ENCODE measurements at regions of chr12 and their contacts with region 1.

Region 1: DNA sequence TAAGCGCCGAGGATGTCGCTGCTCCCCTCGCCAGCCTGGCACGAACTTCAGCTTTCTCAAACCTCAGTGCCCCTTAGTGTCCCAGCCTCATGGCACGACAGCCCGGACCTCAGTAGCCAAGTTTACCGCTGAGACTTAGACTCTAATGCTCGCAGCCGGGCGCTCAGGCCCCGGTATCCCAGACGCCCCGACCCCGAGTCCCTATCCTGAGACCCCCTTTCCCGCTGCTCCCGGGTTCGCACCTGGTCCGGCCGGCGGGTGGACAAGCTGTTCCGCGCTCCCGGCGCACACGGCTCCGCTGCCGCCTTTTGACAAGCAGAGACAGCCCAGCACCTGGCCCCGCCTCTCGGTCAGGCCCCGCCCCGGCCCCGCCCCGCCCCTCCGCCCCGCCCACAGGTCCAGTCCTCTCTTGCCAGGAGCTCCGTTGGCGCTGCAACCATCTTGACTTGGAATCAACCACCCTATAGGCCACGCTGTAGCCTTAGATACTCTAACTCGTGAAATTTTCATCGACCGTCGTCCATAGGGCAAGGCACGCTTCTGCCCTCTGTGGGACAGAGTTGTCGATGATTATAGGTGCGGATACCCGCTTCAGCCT is at the start of gene VDR:
- DNase-seq: peak; percentile 28
- ATAC-seq: peak; percentile 31
- H3K4me3 ChIP-seq: peak within 1 kb of the TSS; percentile 30 to 60 (median 42); a peak in 5 of 6 replicates
- H3K27ac ChIP-seq: no peak within 1 kb of the TSS
- H3K4me1 ChIP-seq: peaks cover 59% of the 10 kb centered on the region
- H3K27me3 ChIP-seq: peaks cover 0 to 31% of the 10 kb centered on the region in 2 experiments; a peak in 3 of 5 replicates
- CTCF ChIP-seq: no peak
- EP300 ChIP-seq: no peak
- POLR2A ChIP-seq: no peak
- RAD21 ChIP-seq: no peak
- total RNA-seq, gene VDR: 0.21 and 0.33 TPM in 2 replicates

Region 2: GRCh38 chr12:47949441-47950308 is 44.9 kb after region 1 on chr12:
- CTCF ChIA-PET with region 1: interaction called, 30 read pairs
- POLR2A ChIA-PET with region 1: interaction called, 3 read pairs
- in situ Hi-C with region 1: loop called (anchors 5 kb)
- intact Hi-C with region 1: loop called (anchors 1 kb)
- DNase-seq: peak; percentile 76
- ATAC-seq: peak; percentile 89
- H3K4me3 ChIP-seq: peak overlapping the region; percentile 34 to 54 (median 41); a peak in 5 of 6 replicates
- H3K27ac ChIP-seq: peak overlapping the region; percentile 51
- H3K4me1 ChIP-seq: peaks cover 60% of the 10 kb centered on the region
- H3K27me3 ChIP-seq: peaks cover 3 to 25% of the 10 kb centered on the region in 2 experiments
- CTCF ChIP-seq: peak; percentile 89
- EP300 ChIP-seq: 0 out of 4 replicates have a peak, but pooled peaks of 1 of the 2 experiments have one; percentile 20
- POLR2A ChIP-seq: no peak
- RAD21 ChIP-seq: peak; percentile 78

Region 3: DNA sequence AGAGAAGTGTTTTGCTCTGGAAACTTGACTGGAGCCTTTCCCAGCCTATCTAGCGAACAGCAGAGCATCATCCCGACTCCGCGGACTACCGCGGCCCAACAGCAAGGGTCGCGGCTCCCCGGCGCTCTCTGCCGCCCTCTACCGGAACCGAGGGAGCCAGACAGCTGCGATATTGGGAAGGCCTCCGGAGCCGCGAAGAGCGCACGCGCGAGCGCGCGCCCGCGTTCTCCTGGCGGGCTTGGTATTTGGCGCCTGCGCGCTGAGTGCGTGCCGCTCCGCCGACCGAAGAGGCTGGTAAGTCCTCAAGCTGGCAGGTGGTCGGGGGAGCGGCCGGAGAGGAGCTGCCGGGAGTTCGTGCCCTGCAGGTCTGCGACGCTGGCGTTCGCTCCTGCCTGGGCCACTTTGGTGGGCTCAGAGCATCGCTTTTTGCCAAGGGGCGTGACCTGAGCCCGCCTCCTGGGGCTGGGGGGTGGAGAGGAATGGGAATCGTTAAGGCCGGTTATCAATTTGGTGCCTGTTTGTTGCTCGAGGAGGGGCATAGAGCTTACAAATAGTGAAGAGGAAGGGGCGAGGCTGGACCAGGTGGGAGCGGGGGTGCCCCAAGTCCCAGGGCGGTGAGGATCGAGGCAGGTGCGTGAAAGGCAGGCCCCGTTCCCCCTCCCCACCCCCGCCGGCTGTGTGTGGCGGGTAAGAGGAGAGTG is 58.7 kb after region 1 on chr12 and contains the start of gene TMEM106C:
- CTCF ChIA-PET with region 1: interaction called, 5 read pairs
- POLR2A ChIA-PET with region 1: interaction called, 3 read pairs
- in situ Hi-C with region 1: no loop called
- intact Hi-C with region 1: loop called (anchors 2 kb)
- DNase-seq: peak; percentile 82
- ATAC-seq: peak; percentile 96
- H3K4me3 ChIP-seq: peak within 1 kb of the TSS; percentile 66 to 87 (median 78)
- H3K27ac ChIP-seq: no peak within 1 kb of the TSS
- H3K4me1 ChIP-seq: peaks cover 18% of the 10 kb centered on the region
- H3K27me3 ChIP-seq: peaks cover 4 to 20% of the 10 kb centered on the region in 2 experiments; a peak in 4 of 5 replicates
- CTCF ChIP-seq: peak; percentile 98
- EP300 ChIP-seq: no peak
- POLR2A ChIP-seq: peak; percentile 38 to 63; a peak in 3 of 4 replicates
- RAD21 ChIP-seq: peak; percentile 92
- total RNA-seq, gene TMEM106C: 132 and 134 TPM in 2 replicates

Region 4: GRCh38 chr12:48037267-48037915 is 132.6 kb after region 1 on chr12:
- CTCF ChIA-PET with region 1: no interaction called
- POLR2A ChIA-PET with region 1: no interaction called
- in situ Hi-C with region 1: no loop called
- intact Hi-C with region 1: loop called (anchors 10 kb)
- DNase-seq: peak; percentile 52
- ATAC-seq: peak; percentile 77
- H3K4me3 ChIP-seq: peak overlapping the region; percentile 15 to 44 (median 42); a peak in 5 of 6 replicates
- H3K27ac ChIP-seq: no peak overlapping the region
- H3K4me1 ChIP-seq: peaks cover 39% of the 10 kb centered on the region
- H3K27me3 ChIP-seq: no peaks in the 10 kb centered on the region; a peak in 1 of 5 replicates
- CTCF ChIP-seq: no peak
- EP300 ChIP-seq: no peak
- POLR2A ChIP-seq: no peak
- RAD21 ChIP-seq: no peak

Region 5: GRCh38 chr12:48527891-48528675 is 623.3 kb after region 1 on chr12:
- CTCF ChIA-PET with region 1: no interaction called
- POLR2A ChIA-PET with region 1: no interaction called
- in situ Hi-C with region 1: no loop called
- intact Hi-C with region 1: no loop called
- DNase-seq: no peak
- ATAC-seq: no peak
- H3K4me3 ChIP-seq: no peak overlapping the region
- H3K27ac ChIP-seq: no peak overlapping the region
- H3K4me1 ChIP-seq: no peaks in the 10 kb centered on the region
- H3K27me3 ChIP-seq: peaks cover 4 to 15% of the 10 kb centered on the region in 2 experiments; a peak in 3 of 5 replicates
- CTCF ChIP-seq: no peak
- EP300 ChIP-seq: no peak
- POLR2A ChIP-seq: no peak
- RAD21 ChIP-seq: no peak

Measured in HepG2 (cell line).